Ascending aorta (tissue), 2 donors: ENCODE measurements at regions of chr20 and their contacts with region 1.

Region 1: DNA sequence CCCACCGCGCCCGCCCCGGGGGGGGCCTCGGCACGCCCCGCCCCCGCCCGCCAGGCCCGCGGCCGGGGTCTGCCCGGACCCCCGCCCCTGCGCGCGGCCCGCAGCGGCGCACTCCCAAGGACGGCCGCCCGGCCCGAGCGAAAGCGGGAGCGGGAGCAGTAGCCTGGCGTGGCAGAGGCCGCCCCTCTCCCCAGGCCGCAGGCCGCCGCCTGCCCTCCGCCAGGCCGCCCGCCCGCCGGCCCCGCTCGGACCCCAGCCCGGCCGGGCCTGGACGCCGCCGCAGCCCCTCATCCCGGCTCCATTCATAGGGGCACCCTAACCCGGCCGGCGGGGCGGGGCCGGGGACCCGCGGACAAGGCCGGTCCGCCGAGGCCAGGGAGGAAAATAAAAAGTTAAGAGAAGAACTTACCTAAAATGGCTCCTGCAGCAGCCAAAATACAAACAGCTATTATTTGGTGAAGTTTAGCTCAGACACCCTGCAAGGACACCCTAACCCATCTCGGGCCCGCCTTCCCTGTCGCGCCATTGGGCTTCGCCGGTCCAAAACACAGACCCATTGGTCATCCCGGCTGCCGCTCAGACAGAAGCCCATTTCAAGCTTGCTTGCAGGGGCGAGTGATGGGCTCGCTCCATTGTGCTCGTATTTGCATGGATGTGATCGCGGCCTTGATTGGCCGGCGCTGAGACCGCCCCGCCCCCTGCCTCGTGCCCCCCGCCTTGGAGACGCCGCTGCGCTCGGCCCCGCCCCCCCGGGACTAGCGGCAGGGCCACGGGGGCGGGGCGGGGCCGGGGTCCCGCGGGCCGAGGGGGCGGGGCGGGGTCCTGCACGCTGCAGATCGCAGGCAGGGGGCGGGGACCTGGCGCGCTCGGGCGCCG is at the start of gene CHD6:
- DNase-seq: peak; percentile 99 to 100
- H3K4me3 ChIP-seq: peak within 1 kb of the TSS; percentile 82 to 99
- H3K27ac ChIP-seq: peak within 1 kb of the TSS; percentile 79 to 85
- H3K4me1 ChIP-seq: peaks cover 2 to 28% of the 10 kb centered on the region in 2 donors
- H3K27me3 ChIP-seq: no peaks in the 10 kb centered on the region
- CTCF ChIP-seq: no peak
- total RNA-seq, gene CHD6: 42.9 TPM

Region 2: GRCh38 chr20:41136680-41137613 is 481.2 kb before region 1 on chr20 and contains the start of gene PLCG1:
- intact Hi-C with region 1: loop called (anchors 5 kb)
- DNase-seq: peak; percentile 46 to 94
- H3K4me3 ChIP-seq: peak within 1 kb of the TSS; percentile 86 to 99
- H3K27ac ChIP-seq: peak within 1 kb of the TSS; percentile 98
- H3K4me1 ChIP-seq: peaks cover 0 to 35% of the 10 kb centered on the region in 2 donors
- H3K27me3 ChIP-seq: no peaks in the 10 kb centered on the region
- CTCF ChIP-seq: peak in 1 of 3 experiments; percentile 20
- total RNA-seq, gene PLCG1: 168 TPM

Region 3: GRCh38 chr20:41482647-41483552 is 135.3 kb before region 1 on chr20:
- intact Hi-C with region 1: loop called (anchors 5 kb)
- DNase-seq: no peak
- H3K4me3 ChIP-seq: no peak overlapping the region
- H3K27ac ChIP-seq: peak overlapping the region in 1 of 2 donors; percentile 33
- H3K4me1 ChIP-seq: no peaks in the 10 kb centered on the region
- H3K27me3 ChIP-seq: no peaks in the 10 kb centered on the region
- CTCF ChIP-seq: no peak

Region 4: DNA sequence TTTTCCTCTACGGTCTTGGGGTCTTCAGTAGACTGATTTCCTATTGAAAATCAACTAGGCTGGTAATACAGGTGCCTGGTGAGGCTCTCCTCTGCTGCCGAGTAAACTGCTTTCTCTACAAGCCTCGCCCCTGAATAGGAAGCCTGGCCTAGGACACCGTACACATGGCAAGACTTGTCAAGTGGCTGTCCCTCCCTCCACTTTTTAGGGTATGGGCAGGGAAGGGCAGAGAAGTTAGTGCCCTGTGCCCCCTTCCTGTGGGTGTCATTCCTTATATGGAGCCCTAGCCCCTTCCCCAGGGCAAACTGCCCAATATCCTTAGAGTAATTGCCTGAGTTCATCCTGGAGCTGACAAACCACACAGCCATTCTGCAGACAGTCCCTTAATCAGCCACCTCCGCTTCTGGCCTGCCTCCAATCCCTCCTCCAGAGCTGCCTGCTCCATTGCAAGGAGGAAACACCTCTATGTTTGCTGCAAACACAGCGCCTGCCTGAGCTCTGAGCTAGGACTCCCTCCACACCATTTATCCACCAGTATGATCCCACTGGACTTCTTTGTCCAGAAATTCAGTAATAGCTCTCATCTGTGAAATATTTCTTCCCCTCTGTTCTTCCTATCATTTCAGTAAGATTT is 93.1 kb before region 1 on chr20:
- intact Hi-C with region 1: loop called (anchors 10 kb)
- DNase-seq: peak in 1 of 2 donors; percentile 71
- H3K4me3 ChIP-seq: peak overlapping the region; percentile 15 to 23
- H3K27ac ChIP-seq: no peak overlapping the region
- H3K4me1 ChIP-seq: peaks cover 4 to 16% of the 10 kb centered on the region in 2 donors
- H3K27me3 ChIP-seq: no peaks in the 10 kb centered on the region
- CTCF ChIP-seq: no peak

Region 5: GRCh38 chr20:41632896-41633295 is 14.7 kb after region 1 on chr20:
- intact Hi-C with region 1: loop called (anchors 1 kb)
- DNase-seq: no peak
- H3K4me3 ChIP-seq: no peak overlapping the region
- H3K27ac ChIP-seq: peak overlapping the region in 1 of 2 donors; percentile 74
- H3K4me1 ChIP-seq: no peaks in the 10 kb centered on the region
- H3K27me3 ChIP-seq: no peaks in the 10 kb centered on the region
- CTCF ChIP-seq: no peak

Region 6: GRCh38 chr20:41693136-41693979 is 75.2 kb after region 1 on chr20:
- intact Hi-C with region 1: loop called (anchors 2 kb)
- DNase-seq: peak; percentile 38 to 88
- H3K4me3 ChIP-seq: peak overlapping the region; percentile 65 to 76
- H3K27ac ChIP-seq: peak overlapping the region; percentile 82 to 93
- H3K4me1 ChIP-seq: peaks cover 0 to 5% of the 10 kb centered on the region in 2 donors
- H3K27me3 ChIP-seq: no peaks in the 10 kb centered on the region
- CTCF ChIP-seq: peak; percentile 34 to 55 (median 53)

Region 7: DNA sequence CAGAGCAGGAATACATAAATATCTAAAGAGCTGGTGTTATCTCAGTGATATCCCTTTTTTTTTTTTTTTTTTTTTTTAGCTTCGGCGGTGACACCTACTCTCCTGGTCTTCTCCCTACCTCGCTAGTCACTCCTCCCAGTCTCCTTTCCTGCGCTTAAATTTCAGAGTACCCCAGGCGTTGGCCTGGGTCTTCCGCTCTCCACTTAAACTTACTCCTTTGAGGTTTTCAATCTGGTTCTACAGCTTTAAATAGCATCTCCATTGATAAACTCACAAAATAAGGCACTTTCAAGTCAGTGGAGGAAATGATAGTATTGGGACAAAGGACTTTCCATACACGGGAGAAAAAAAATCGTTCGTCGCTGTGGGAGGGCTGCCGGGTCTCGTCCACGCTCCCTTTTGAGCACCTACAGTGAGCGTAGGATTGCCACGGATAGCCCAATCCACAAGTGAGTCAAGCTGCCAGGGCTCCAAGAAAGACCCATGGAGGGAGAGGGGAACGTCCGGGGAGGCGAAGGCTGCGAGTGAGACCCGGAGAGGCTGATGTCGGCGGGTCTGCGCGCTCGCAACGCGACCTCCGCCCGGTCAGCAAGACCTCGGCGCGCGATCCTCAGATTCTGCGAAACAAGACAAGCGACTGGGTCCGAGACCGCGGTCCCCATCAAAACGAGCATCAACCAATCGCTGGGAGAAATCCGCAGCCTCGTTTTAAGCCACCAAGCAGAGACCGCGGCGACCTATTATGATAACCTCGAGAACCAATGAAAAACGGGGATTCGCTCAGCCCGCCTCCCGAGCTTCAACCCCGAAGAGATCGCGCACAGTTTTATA is 1838.9 kb after region 1 on chr20:
- intact Hi-C with region 1: loop called (anchors 5 kb)
- DNase-seq: peak; percentile 78 to 96
- H3K4me3 ChIP-seq: peak overlapping the region; percentile 90 to 91
- H3K27ac ChIP-seq: peak overlapping the region; percentile 99 to 100
- H3K4me1 ChIP-seq: peaks cover 4 to 17% of the 10 kb centered on the region in 2 donors
- H3K27me3 ChIP-seq: no peaks in the 10 kb centered on the region
- CTCF ChIP-seq: no peak